Ascending aorta (tissue), 2 donors: ENCODE measurements at regions of chr9 and their contacts with region 1.

Region 1: DNA sequence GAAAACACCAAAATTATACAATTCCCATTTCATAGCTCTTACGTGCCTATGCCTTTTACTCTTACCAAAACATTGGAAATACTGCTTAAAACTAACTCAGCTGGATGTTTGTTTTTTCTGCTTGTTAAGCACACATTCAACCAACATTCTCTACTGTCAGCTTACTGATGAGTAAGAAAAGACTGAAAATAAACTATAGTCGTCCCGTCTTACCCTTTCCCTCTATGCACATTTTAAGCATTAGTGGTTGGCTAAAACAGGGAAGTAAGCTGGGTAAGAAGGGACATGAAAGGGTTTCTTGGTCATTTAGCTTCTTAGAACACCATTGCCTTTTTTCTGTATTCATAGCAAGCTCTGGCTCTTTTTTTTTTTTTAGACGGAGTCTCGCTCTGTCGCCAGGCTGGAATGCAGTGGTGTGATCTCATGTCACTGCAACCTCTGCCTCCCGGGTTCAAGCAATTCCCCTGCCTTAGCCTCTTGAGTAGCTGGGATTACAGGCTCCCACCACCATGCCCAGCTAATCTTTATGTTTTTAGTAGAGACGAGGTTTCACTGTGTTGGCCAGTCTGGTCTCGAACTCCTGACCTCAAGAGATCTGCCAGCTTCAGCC is 232.1 kb upstream of the PCSK5 start:
- DNase-seq: no peak
- H3K4me3 ChIP-seq: no peak overlapping the region
- H3K27ac ChIP-seq: peak overlapping the region; percentile 52 to 60
- H3K4me1 ChIP-seq: no peaks in the 10 kb centered on the region
- H3K27me3 ChIP-seq: no peaks in the 10 kb centered on the region
- CTCF ChIP-seq: no peak

Region 2: GRCh38 chr9:76107482-76107881 is 449.1 kb after region 1 on chr9:
- intact Hi-C with region 1: loop called (anchors 10 kb)
- DNase-seq: peak; percentile 35 to 90
- H3K4me3 ChIP-seq: no peak overlapping the region
- H3K27ac ChIP-seq: peak overlapping the region; percentile 84 to 87
- H3K4me1 ChIP-seq: peaks cover 17 to 52% of the 10 kb centered on the region in 2 donors
- H3K27me3 ChIP-seq: no peaks in the 10 kb centered on the region
- CTCF ChIP-seq: no peak